HAP-1 (cell line): ENCODE measurements at regions of chr13 and their contacts with region 1.

Region 1: GRCh38 chr13:49976314-49977258 is 20.3 kb upstream of the TRIM13 start:
- DNase-seq: peak; percentile 82 to 84
- H3K4me3 ChIP-seq: no peak overlapping the region
- H3K4me1 ChIP-seq: peaks cover 14% of the 10 kb centered on the region
- H3K27me3 ChIP-seq: no peaks in the 10 kb centered on the region

Region 2: GRCh38 chr13:50798923-50799322 is 822.3 kb after region 1 on chr13:
- in situ Hi-C with region 1: loop called (anchors 5 kb)
- DNase-seq: no peak
- H3K4me3 ChIP-seq: no peak overlapping the region
- H3K4me1 ChIP-seq: no peaks in the 10 kb centered on the region
- H3K27me3 ChIP-seq: no peaks in the 10 kb centered on the region; the same call in 1 of the 2 replicates

Region 3: DNA sequence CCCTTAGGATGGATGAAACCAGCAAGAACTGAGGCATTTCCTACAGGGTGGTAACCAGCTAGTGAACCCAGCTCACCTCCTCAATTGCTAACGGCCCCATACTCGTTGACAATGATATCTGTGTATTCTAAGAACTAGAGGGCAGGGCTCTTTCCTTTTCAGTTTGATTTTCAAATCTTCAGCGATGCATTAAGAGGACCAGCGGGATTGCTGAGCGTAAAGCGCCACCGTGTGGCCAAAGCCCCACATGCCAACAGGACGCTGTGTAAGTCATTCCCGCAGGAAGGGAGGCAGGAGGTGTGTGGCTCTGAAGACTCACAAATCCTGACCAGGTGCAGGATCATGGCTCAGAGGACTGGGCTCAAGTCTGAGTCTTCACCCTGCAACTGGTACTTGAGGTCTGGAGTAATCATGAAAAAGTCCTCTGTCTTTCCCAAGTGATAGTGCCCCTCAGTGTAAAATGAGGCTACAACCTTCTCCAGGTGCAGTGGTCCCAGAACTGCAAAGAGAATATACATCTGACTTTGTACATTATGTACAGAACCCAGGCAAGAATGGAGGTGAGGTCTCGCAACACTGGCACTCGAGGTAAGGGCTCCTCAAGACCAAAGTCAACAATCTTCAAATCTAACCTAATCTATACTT is 1093.5 kb after region 1 on chr13:
- in situ Hi-C with region 1: loop called (anchors 10 kb)
- DNase-seq: peak; percentile 79 to 88
- H3K4me3 ChIP-seq: no peak overlapping the region
- H3K4me1 ChIP-seq: peaks cover 3% of the 10 kb centered on the region
- H3K27me3 ChIP-seq: peaks cover 4% of the 10 kb centered on the region; the same call in 1 of the 2 replicates